Activated B cell treated with CpG ODN at 0.5 μM for 24 hours (primary cell): ENCODE measurements at regions of chr20 and their contacts with region 1.

Region 1: GRCh38 chr20:57698117-57698866 is 11.5 kb downstream of the PMEPA1 start:
- DNase-seq: no peak
- ATAC-seq: peak; percentile 35
- H3K4me3 Mint-ChIP-seq: peak overlapping the region; percentile 76
- H3K27ac Mint-ChIP-seq: peak overlapping the region; percentile 92
- H3K4me1 Mint-ChIP-seq: peaks cover 97% of the 10 kb centered on the region
- H3K27me3 Mint-ChIP-seq: no peaks in the 10 kb centered on the region
- CTCF ChIP-seq: no peak

Region 2: GRCh38 chr20:57102566-57103451 is 595.5 kb before region 1 on chr20:
- CTCF ChIA-PET with region 1: no interaction called
- POLR2A ChIA-PET with region 1: no interaction called
- intact Hi-C with region 1: no loop called
- DNase-seq: no peak
- ATAC-seq: no peak
- H3K4me3 Mint-ChIP-seq: no peak overlapping the region
- H3K27ac Mint-ChIP-seq: no peak overlapping the region
- H3K4me1 Mint-ChIP-seq: no peaks in the 10 kb centered on the region
- H3K27me3 Mint-ChIP-seq: peaks cover 3% of the 10 kb centered on the region
- CTCF ChIP-seq: no peak

Region 3: GRCh38 chr20:57480444-57481160 is 217.7 kb before region 1 on chr20:
- CTCF ChIA-PET with region 1: no interaction called
- POLR2A ChIA-PET with region 1: interaction called, 3 read pairs
- intact Hi-C with region 1: loop called (anchors 2 kb)
- DNase-seq: peak; percentile 64
- ATAC-seq: peak; percentile 69
- H3K4me3 Mint-ChIP-seq: peak overlapping the region; percentile 73
- H3K27ac Mint-ChIP-seq: peak overlapping the region; percentile 81
- H3K4me1 Mint-ChIP-seq: peaks cover 82% of the 10 kb centered on the region
- H3K27me3 Mint-ChIP-seq: no peaks in the 10 kb centered on the region
- CTCF ChIP-seq: no peak

Region 4: DNA sequence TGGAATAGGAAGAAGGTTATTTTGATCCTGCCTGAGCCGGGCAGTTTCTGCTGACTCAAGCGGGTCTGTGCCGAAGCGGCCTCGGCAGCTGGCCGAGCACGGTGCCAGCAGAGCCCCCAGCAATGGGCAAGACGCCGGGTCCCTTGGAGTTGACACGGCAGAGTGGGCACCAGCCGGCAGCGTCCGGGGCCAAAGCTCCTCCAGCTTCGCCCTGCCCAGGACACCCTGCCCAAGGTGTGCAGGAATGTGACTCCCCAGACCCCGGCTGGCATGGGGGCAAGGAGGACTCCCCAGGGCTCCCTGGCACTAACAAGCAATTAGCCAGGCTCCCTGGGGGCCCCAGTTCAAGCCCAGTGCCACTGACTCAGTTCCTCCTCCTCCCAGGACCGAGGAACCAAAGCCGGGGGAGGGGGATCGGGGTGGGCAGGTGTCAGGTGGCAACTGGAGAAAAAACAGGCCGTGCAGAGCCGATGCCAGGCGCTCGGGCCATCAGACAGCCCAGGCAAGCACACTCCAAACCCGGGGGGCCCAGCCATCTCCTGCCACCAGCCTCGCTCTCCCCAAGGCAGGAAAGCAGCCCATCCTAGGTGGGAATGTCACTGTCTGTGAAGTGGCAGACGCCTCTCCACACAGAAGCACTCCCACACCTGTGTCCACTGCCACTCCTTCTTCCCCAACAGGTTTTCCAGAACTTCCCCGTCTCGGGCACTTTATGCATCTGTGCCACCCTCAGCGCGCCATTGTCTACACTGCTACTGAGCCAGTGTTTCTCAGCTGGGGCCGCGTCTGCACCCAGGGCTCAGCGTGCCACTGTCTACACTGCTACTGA is 36.9 kb before region 1 on chr20:
- CTCF ChIA-PET with region 1: no interaction called
- POLR2A ChIA-PET with region 1: no interaction called
- intact Hi-C with region 1: no loop called
- DNase-seq: peak; percentile 10
- ATAC-seq: no peak
- H3K4me3 Mint-ChIP-seq: no peak overlapping the region
- H3K27ac Mint-ChIP-seq: no peak overlapping the region
- H3K4me1 Mint-ChIP-seq: peaks cover 32% of the 10 kb centered on the region
- H3K27me3 Mint-ChIP-seq: no peaks in the 10 kb centered on the region
- CTCF ChIP-seq: no peak

Region 5: DNA sequence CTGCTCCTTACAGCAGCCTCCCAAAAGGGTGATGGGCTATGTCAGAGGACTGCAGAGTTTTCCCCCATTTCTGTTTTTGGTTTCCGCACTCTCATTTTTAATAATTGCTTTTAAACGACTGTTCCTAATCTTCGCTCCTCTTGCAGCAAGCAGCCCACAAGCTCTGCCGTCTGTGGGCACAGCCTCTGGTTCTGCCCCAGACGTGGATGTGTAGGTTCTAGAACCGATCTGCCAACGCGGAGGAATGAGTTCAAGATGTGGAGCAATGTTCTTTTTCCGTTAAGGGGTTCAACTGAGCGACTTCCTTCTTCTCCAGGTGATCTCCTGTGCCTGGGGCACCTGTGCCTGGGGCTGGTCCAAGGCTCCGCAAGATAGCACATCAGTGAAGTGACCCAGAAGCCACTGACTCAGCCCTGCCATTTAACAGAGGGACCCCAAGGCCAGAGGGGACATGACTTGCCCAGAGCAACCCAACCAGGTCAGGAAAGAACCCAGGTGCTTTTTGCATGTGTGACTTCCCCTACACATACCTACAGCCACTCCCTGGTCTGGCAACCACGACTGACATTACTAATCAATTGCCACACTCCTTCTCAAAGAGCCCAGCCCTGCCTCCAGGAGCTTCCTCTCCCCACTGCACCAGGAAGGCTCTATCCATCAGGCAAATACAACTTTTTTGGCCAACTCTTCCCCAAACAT is 11.2 kb before region 1 on chr20:
- CTCF ChIA-PET with region 1: interaction called, 64 read pairs
- POLR2A ChIA-PET with region 1: interaction called, 189 read pairs
- intact Hi-C with region 1: loop called (anchors 1 kb)
- DNase-seq: no peak
- ATAC-seq: peak; percentile 53
- H3K4me3 Mint-ChIP-seq: peak overlapping the region; percentile 45
- H3K27ac Mint-ChIP-seq: peak overlapping the region; percentile 57
- H3K4me1 Mint-ChIP-seq: peaks cover 95% of the 10 kb centered on the region
- H3K27me3 Mint-ChIP-seq: no peaks in the 10 kb centered on the region
- CTCF ChIP-seq: no peak

Region 6: GRCh38 chr20:57709931-57710799 is 11.9 kb after region 1 on chr20 and contains the start of gene PMEPA1:
- CTCF ChIA-PET with region 1: interaction called, 16 read pairs
- POLR2A ChIA-PET with region 1: interaction called, 22 read pairs
- intact Hi-C with region 1: loop called (anchors 1 kb)
- DNase-seq: peak; percentile 95
- ATAC-seq: peak; percentile 86
- H3K4me3 Mint-ChIP-seq: peak within 1 kb of the TSS; percentile 99
- H3K27ac Mint-ChIP-seq: peak within 1 kb of the TSS; percentile 92
- H3K4me1 Mint-ChIP-seq: peaks cover 59% of the 10 kb centered on the region
- H3K27me3 Mint-ChIP-seq: no peaks in the 10 kb centered on the region
- CTCF ChIP-seq: no peak
- total RNA-seq, gene PMEPA1: 33.1 and 34.8 TPM in 2 replicates

Region 7: DNA sequence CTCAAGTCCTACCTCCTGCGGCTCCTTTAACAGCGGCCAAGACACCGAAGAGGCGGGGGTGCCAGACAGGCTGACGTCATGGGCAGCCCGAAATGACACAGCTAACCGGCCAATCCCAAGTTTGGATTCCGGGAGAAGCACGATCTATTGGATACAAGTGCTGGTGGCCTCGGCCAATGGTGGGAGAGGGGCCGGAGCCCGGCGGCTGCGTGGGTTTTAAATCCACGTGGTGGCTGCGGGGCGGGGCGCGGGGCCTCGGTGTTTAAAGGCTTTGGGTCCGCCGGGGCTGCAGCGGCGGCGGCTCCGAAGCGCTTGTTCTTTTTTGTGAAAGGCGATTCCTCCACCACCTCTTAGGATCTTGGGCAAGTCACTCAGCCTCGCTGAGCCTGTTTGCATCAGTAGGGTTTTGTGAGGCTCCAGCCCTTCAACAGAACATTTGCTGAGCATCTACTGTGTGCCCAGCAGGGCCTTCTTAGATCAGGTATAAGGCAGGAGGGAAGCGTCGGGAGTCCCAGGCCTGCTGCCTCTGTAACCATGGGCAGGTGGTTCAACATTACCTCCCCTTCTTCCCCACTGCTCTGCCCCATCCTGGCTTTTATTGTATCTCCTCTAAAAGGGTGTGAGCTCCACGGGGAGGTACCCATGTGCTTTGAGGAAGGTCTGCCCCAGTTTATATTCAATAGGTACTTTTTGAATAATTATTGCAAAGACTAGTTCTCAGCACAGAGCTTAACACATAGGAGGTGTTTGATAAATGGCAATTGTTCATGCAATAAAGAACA is 20.4 kb after region 1 on chr20:
- CTCF ChIA-PET with region 1: interaction called, 3 read pairs
- POLR2A ChIA-PET with region 1: no interaction called
- intact Hi-C with region 1: loop called (anchors 1 kb)
- DNase-seq: peak; percentile 85
- ATAC-seq: peak; percentile 100
- H3K4me3 Mint-ChIP-seq: peak overlapping the region; percentile 68
- H3K27ac Mint-ChIP-seq: peak overlapping the region; percentile 56
- H3K4me1 Mint-ChIP-seq: peaks cover 9% of the 10 kb centered on the region
- H3K27me3 Mint-ChIP-seq: peaks cover 3% of the 10 kb centered on the region
- CTCF ChIP-seq: no peak

Region 8: DNA sequence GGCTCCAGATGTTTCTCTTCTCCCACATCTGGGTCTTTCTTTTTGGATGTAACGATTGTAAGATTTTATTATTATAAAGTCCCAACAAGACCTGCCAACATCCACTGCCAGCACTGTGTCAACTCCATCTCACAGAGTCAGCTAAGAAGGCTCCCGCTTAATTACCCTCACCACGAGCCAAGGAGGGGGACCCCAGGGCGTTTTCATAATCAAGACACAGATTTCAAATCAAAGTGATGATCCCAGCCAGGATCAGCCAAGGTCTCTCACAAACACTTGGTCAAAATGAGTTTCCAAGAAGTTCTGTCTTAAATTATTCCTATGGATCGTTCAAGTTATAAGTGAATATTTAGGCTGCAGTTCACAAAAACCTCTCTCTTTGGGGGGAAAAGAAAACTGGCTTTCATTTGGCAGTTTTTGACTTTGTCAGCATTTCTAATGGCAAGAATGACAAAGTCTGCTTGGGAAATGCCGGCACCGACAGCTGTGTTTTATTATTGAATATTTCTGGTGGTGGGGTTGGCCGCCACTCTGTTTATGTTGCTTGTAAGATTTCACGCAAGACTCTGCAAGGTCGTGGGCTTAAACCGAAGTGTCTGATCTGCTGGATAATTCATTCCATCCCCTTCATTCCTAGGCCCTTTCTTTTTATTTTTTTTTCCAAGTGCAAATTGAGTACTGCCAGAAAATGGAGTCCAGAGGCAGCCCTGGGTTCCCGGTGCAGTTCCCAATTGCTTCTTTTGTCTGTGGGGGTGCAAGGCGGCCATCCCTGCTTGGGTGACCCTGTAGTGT is 181.7 kb after region 1 on chr20:
- CTCF ChIA-PET with region 1: no interaction called
- POLR2A ChIA-PET with region 1: no interaction called
- intact Hi-C with region 1: no loop called
- DNase-seq: no peak
- ATAC-seq: no peak
- H3K4me3 Mint-ChIP-seq: no peak overlapping the region
- H3K27ac Mint-ChIP-seq: no peak overlapping the region
- H3K4me1 Mint-ChIP-seq: no peaks in the 10 kb centered on the region
- H3K27me3 Mint-ChIP-seq: peaks cover 19% of the 10 kb centered on the region
- CTCF ChIP-seq: no peak

Region 9: DNA sequence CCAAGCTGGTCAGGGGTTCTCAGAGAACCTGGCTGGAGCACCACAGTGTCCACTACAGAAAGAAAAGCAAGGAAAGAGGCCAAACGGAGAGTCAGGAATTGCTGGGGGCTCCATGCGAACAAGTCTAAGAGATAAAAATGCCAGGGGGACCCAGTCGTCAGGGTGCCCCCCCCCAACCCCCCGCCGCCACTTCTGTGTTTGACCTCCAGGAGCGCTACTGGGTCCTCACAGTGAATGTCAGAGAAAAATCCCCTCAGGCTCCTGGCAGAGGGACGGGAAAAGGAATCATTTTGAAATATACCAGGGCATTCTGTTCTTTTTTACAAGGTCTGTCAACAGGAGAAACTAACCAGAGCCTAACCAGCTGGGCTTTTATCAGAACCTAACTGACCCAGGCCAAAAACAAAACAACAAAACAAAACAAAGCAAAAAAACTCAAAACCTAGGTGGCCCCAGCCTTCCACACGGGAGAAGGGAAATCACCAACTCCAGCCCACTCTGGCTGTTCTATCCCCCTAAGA is 1264.8 kb after region 1 on chr20:
- CTCF ChIA-PET with region 1: no interaction called
- POLR2A ChIA-PET with region 1: interaction called, 17 read pairs
- intact Hi-C with region 1: no loop called
- DNase-seq: no peak
- ATAC-seq: no peak
- H3K4me3 Mint-ChIP-seq: no peak overlapping the region
- H3K27ac Mint-ChIP-seq: no peak overlapping the region
- H3K4me1 Mint-ChIP-seq: no peaks in the 10 kb centered on the region
- H3K27me3 Mint-ChIP-seq: no peaks in the 10 kb centered on the region
- CTCF ChIP-seq: no peak